Colonic mucosa (tissue), 4 donors: ENCODE measurements at regions of chr10 and their contacts with region 1.

Region 1: DNA sequence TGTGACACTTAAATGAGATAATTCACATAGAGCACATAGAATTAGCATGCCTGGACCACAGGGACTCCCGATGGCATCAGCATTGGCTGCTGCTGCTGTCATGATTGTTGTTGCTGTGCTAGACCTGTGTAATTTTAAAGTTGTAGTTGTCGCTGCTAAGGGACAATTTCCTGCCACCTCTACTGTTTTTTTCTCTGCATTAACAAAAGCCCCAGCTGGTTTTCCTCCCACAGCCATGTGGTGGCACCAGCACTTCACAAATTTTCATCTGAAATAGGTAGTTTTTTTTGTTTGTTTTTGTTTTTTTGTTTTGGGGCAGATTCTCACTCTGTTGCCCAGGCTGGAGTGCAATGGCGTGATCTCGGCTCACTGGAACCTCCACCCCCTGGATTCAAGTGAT is 25.4 kb upstream of the PRXL2A start:
- DNase-seq: peak; percentile 40
- H3K4me3 ChIP-seq: no peak overlapping the region
- H3K27ac ChIP-seq: no peak overlapping the region
- H3K4me1 ChIP-seq: peaks cover 6% of the 10 kb centered on the region
- H3K27me3 ChIP-seq: no peaks in the 10 kb centered on the region
- CTCF ChIP-seq: peak; percentile 48

Region 2: GRCh38 chr10:80344276-80344675 is 38.7 kb before region 1 on chr10:
- intact Hi-C with region 1: no loop called
- DNase-seq: no peak
- H3K4me3 ChIP-seq: no peak overlapping the region
- H3K27ac ChIP-seq: no peak overlapping the region
- H3K4me1 ChIP-seq: no peaks in the 10 kb centered on the region
- H3K27me3 ChIP-seq: no peaks in the 10 kb centered on the region
- CTCF ChIP-seq: no peak

Region 3: DNA sequence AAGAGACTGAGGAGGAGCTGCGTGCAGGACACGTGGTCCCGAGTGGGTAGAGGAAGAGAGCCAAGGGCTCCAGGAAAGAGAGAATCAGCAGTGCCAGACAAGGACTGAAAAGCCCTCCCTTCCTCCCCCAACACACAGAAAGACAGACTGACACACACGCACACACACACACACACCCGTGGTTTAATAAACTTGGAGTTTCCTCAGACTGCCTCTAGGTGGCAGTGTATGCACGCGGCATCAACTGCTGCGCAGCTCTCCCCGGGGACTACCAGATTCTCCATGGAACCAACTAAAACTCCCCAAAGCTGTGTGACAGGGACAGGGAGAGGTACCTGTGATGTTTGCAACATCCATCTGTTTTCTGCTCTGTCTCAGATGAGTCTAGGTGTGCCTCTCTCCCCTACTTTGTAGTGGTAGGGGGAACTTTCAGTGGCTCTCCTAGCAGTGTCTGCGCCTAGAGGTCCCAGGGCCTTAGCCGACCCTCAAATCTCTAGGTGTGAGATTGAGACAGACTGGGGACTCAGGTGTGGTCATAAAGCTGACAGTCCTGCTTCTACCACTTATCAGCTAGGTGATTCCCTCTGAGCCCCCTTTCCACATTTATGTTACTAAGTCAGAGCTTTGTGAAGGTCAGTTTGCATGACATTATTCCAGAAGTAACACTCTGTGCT is 61.8 kb after region 1 on chr10:
- intact Hi-C with region 1: loop called (anchors 5 kb)
- DNase-seq: peak; percentile 71
- H3K4me3 ChIP-seq: no peak overlapping the region
- H3K27ac ChIP-seq: no peak overlapping the region
- H3K4me1 ChIP-seq: no peaks in the 10 kb centered on the region
- H3K27me3 ChIP-seq: no peaks in the 10 kb centered on the region
- CTCF ChIP-seq: peak; percentile 71

Region 4: GRCh38 chr10:80504158-80504811 is 121.3 kb after region 1 on chr10:
- intact Hi-C with region 1: loop called (anchors 2 kb)
- DNase-seq: peak; percentile 68
- H3K4me3 ChIP-seq: no peak overlapping the region
- H3K27ac ChIP-seq: peak overlapping the region; percentile 50
- H3K4me1 ChIP-seq: peaks cover 27% of the 10 kb centered on the region
- H3K27me3 ChIP-seq: no peaks in the 10 kb centered on the region
- CTCF ChIP-seq: no peak